CD14-positive monocyte (primary cell): ENCODE measurements at regions of chr1 and their contacts with region 1.

Region 1: DNA sequence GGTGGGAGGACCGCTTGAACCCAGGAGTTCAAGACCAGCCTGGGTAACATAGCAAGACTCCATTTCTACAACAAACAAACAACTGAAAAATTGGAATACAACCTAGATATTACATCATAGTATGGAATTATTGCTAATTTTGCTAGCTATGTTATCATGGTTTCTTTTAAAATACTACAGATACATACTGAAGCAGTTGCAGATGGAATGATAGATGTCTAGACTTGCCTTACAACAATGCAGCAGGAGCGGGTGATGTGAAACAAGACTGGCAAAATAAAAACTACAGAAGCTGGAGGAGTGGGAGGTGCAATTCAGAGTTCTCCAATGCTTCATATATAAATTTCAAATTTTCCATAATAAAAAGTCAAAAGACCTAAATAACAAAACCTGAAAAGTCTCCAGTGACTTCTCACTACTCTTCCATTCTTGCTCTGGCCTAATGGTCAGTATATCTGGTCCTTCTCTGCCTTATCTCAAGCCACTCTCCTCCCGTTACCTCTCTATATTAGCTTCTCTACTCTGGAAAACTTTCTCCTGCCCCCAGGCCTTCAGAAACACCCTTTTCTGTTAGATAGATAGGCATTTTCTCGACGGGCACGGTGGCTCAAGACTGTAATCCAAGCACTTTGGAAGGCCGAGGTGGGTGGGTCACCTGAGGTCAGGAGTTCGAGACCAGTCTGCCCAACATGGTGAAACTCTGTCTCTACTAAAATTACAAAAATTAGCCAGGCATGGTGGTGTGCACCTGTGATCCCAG is 28.5 kb upstream of the TMEM200B start:
- DNase-seq: no peak
- H3K4me3 ChIP-seq: no peak overlapping the region
- H3K4me3 Mint-ChIP-seq: no peak overlapping the region
- H3K27ac ChIP-seq: no peak overlapping the region
- H3K27ac Mint-ChIP-seq: peak overlapping the region in 5 of 7 donors; percentile 0 to 58 (median 26)
- H3K4me1 ChIP-seq: no peaks in the 10 kb centered on the region
- H3K4me1 Mint-ChIP-seq: no peaks in the 10 kb centered on the region
- H3K27me3 ChIP-seq: no peaks in the 10 kb centered on the region
- H3K27me3 Mint-ChIP-seq: peaks cover 0 to 1% (median 1%) of the 10 kb centered on the region in 3 donors
- CTCF ChIP-seq: no peak

Region 2: DNA sequence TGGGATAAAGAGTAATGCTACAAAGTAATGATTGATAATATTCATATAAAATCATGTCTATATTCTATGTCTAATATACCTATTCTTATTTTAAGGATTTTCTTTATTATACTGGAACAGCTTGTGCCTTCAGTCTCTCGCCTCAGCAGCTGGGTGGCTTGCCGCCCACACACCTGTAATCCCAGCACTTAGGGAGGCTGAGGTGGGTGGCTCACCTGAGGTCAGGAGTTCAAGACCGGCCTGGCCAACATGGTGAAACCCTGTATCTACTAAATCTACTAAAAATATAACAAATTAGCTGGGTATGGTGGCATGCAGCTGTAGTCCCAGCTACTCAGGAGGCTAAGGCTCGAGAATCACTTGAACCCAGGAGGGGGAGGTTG is 607.0 kb before region 1 on chr1:
- intact Hi-C with region 1: loop called in 1 of 2 experiments (anchors 5 kb)
- DNase-seq: no peak
- H3K4me3 ChIP-seq: no peak overlapping the region
- H3K4me3 Mint-ChIP-seq: no peak overlapping the region
- H3K27ac ChIP-seq: no peak overlapping the region
- H3K27ac Mint-ChIP-seq: no peak overlapping the region
- H3K4me1 ChIP-seq: no peaks in the 10 kb centered on the region
- H3K4me1 Mint-ChIP-seq: no peaks in the 10 kb centered on the region
- H3K27me3 ChIP-seq: no peaks in the 10 kb centered on the region
- H3K27me3 Mint-ChIP-seq: peaks cover 0 to 5% (median 0%) of the 10 kb centered on the region in 3 donors
- CTCF ChIP-seq: no peak

Region 3: DNA sequence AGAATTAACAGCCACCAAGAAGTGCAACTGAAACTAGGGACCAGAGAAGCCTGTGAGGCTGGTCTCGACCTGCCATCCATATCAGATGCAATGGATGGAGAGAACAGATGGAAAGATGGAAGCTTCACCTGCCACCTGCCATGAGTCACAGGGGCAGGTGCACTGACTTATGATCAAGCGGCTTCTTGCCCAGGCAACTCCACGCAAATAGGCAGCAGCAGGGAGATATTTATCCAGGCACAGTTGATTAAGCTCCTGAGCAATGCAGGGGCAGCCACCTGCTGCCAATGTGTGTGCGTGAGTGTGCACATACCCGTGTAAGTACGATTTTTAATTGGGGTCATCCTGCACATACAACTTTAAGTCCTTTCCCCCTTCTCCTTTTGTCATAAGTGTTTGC is 258.2 kb after region 1 on chr1:
- intact Hi-C with region 1: no loop called
- DNase-seq: no peak
- H3K4me3 ChIP-seq: no peak overlapping the region
- H3K4me3 Mint-ChIP-seq: no peak overlapping the region
- H3K27ac ChIP-seq: no peak overlapping the region
- H3K27ac Mint-ChIP-seq: no peak overlapping the region
- H3K4me1 ChIP-seq: no peaks in the 10 kb centered on the region
- H3K4me1 Mint-ChIP-seq: no peaks in the 10 kb centered on the region
- H3K27me3 ChIP-seq: no peaks in the 10 kb centered on the region
- H3K27me3 Mint-ChIP-seq: peaks cover 5 to 10% (median 6%) of the 10 kb centered on the region in 3 donors
- CTCF ChIP-seq: no peak